ENCODE measurements at regions of chr1 and their contacts with region 1.

Region 1: DNA sequence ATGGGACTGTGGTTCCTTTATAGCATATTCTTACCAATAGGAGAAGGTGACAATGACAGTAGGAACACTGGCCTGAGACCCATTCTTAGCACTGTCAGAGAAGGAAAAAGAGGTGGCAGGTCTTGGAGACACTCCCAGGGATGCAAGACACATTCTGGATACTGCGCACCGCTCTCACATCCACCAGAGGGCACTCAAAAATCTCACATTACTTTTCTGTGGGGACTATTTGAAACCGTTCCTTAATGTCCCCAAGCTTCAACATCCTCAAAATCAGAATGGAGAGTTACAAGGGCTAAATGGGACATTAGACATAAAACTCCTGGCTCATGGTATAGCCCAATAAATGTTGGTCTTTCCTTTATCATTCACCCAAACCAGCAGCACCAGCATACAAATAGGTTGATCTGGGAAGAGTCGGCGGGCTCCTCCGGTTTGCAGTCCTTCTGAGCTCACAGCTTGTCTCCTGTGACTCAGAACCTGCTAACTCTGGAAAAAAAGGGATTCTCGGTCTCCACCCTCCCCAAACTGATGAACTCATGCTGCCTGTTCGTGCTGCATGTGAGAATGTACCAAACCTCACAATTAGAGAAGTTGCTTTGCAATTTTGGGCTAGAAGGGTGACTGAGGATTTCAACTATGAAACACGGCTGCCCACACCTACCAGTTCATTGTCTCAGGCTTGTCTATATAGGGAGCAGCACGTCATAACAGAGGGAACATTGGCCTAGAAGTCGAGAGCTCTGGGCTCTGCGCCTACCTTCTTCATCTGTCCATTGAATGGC is 40.2 kb downstream of the IL12RB2 start:
- DNase-seq: peak in 3 of 5 donors; percentile 13 to 33 (median 25)
- ATAC-seq: peak; percentile 67 to 86 (median 76)
- H3K4me3 ChIP-seq: no peak overlapping the region
- H3K27ac ChIP-seq: no peak overlapping the region
- H3K4me1 ChIP-seq: no peaks in the 10 kb centered on the region
- H3K27me3 ChIP-seq: peaks cover 0 to 3% (median 0%) of the 10 kb centered on the region in 9 donors
- CTCF ChIP-seq: peak; percentile 56 to 81 (median 73)
- POLR2A ChIP-seq: no peak

Region 2: GRCh38 chr1:67194209-67194863 is 153.5 kb before region 1 on chr1:
- intact Hi-C with region 1: no loop called
- DNase-seq: no peak
- ATAC-seq: no peak
- H3K4me3 ChIP-seq: no peak overlapping the region
- H3K27ac ChIP-seq: no peak overlapping the region
- H3K4me1 ChIP-seq: peaks cover 0 to 7% (median 0%) of the 10 kb centered on the region in 12 donors
- H3K27me3 ChIP-seq: no peaks in the 10 kb centered on the region
- CTCF ChIP-seq: no peak
- POLR2A ChIP-seq: no peak

Region 3: GRCh38 chr1:67230539-67230938 is 117.3 kb before region 1 on chr1:
- intact Hi-C with region 1: loop called in 2 of 10 experiments (anchors 10 kb)
- DNase-seq: no peak
- ATAC-seq: no peak
- H3K4me3 ChIP-seq: no peak overlapping the region
- H3K27ac ChIP-seq: no peak overlapping the region
- H3K4me1 ChIP-seq: no peaks in the 10 kb centered on the region
- H3K27me3 ChIP-seq: peaks cover 0 to under 1% (median 0%) of the 10 kb centered on the region in 9 donors
- CTCF ChIP-seq: no peak
- POLR2A ChIP-seq: no peak